Adrenal gland (tissue), 19 donors: ENCODE measurements at regions of chr5 and their contacts with region 1.

Region 1: DNA sequence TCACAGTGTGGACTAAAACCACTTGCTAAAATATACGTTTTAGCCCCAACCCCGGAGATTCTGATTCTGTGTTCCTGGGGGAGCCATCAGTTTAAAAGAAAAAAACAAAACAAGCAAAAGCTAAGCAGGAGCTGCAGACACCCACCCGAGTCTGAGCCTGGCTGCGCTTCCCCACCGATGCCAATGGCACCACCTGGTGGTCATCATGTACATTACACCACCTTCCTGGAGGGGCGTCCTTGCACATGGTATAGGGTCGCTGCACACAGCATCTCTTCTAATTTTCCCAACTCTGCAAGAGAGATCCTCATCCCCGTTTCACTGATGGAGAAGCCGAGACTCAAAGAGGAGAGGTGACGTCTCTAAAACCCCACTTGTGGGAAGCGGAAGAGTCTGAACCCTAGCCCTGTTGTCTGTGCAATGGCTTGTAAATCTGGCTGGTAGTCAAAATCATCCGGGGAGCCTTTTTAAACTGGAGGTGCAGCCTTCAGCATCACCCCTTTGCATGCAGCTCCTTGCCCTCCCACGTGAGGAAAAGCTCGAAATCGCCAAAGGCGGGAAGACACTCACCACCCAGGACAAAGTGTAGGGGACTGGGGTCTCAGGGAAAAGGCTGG is 23.1 kb upstream of the CNOT6 start:
- DNase-seq: peak; percentile 36 to 64 (median 52)
- H3K4me3 ChIP-seq: no peak overlapping the region
- H3K27ac ChIP-seq: no peak overlapping the region
- H3K4me1 ChIP-seq: no peaks in the 10 kb centered on the region
- H3K27me3 ChIP-seq: no peaks in the 10 kb centered on the region
- CTCF ChIP-seq: peak; percentile 69 to 92 (median 86)
- POLR2A ChIP-seq: no peak

Region 2: GRCh38 chr5:180126726-180127681 is 344.1 kb before region 1 on chr5:
- intact Hi-C with region 1: loop called in 1 of 2 experiments (anchors 5 kb)
- DNase-seq: peak in 4 of 7 donors; percentile 32 to 46 (median 34)
- H3K4me3 ChIP-seq: no peak overlapping the region
- H3K27ac ChIP-seq: no peak overlapping the region
- H3K4me1 ChIP-seq: no peaks in the 10 kb centered on the region
- H3K27me3 ChIP-seq: peaks cover 13% of the 10 kb centered on the region
- CTCF ChIP-seq: peak; percentile 60 to 89 (median 76)
- POLR2A ChIP-seq: no peak

Region 3: DNA sequence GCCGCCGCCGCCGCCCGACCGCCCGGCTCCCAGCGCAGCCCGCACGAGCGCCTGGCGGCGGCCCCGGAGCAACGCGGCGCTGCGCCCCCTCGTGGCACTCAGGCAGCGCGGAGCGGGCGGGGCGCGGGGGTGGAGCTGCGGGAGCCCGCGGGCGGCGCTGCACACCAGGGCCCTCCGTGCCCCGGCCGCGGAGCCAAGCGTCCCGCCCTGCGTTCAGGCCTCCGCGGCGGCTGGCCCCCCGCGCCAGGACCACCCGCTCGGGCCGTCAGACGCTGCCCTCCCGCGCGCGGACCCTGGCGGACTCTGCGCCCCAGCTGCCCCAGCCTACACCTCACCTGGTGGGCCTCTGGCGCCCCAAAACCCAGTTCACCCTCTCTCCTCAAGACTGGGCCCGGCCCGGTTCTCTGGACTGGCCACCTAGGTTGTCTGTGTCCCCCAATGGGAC is 261.9 kb before region 1 on chr5 and contains the start of gene RASGEF1C:
- intact Hi-C with region 1: loop called in 1 of 2 experiments (anchors 5 kb)
- DNase-seq: peak in 6 of 7 donors; percentile 57 to 76 (median 65)
- H3K4me3 ChIP-seq: peak within 1 kb of the TSS in 1 of 4 donors; percentile 50
- H3K27ac ChIP-seq: no peak within 1 kb of the TSS
- H3K4me1 ChIP-seq: peaks cover 0 to 4% of the 10 kb centered on the region in 2 donors
- H3K27me3 ChIP-seq: peaks cover 7% of the 10 kb centered on the region
- CTCF ChIP-seq: peak in 3 of 6 experiments; percentile 45 to 85 (median 70)
- POLR2A ChIP-seq: no peak
- total RNA-seq, gene RASGEF1C: 0.15 to 1.9 (median 0.52) TPM in 4 of 9 donors, not detected in the others

Region 4: GRCh38 chr5:180291943-180292831 is 178.9 kb before region 1 on chr5 and contains the start of gene MAPK9:
- intact Hi-C with region 1: loop called (anchors 2 to 10 kb)
- DNase-seq: peak; percentile 75 to 89 (median 84)
- H3K4me3 ChIP-seq: peak within 1 kb of the TSS in 3 of 4 donors; percentile 65 to 93 (median 91)
- H3K27ac ChIP-seq: peak within 1 kb of the TSS; percentile 75 to 91 (median 89)
- H3K4me1 ChIP-seq: peaks cover 20 to 28% of the 10 kb centered on the region in 2 donors
- H3K27me3 ChIP-seq: no peaks in the 10 kb centered on the region
- CTCF ChIP-seq: no peak
- POLR2A ChIP-seq: peak; percentile 28 to 53
- total RNA-seq, gene MAPK9: 19.4 to 54.0 (median 36.5) TPM